ENCODE measurements at regions of chr3 and their contacts with region 1.

Region 1: GRCh38 chr3:69558912-69559311 is 173.0 kb upstream of the FRMD4B start:
- DNase-seq: peak in 1 of 3 donors; percentile 45
- ATAC-seq: peak; percentile 89 to 93
- H3K4me3 ChIP-seq: no peak overlapping the region
- H3K27ac ChIP-seq: no peak overlapping the region
- H3K4me1 ChIP-seq: no peaks in the 10 kb centered on the region
- H3K27me3 ChIP-seq: no peaks in the 10 kb centered on the region

Region 2: DNA sequence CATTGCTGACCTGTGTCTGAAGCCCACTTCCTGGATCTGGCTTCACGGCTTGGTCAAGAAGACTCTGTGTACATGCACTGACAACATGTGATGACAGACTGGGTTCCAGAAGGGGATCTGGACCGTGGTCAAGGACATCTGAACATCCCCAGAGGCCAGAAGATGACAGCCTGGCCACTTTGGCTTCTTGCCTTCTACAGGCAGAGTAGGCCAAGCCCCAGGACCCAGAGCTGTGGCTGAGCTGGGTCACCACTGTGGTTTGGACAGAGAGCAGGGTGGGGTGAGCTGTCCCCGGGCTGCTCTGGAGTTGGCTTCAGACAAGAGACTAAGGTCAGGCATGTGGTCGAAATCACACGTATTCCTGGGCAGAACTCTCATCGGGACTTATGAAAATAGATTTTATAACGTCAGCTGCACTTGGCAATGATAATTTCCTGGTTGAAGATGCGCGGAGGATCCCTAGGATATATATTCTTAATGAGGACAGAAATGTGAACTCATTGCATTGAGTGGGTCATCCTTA is 59.0 kb before region 1 on chr3:
- intact Hi-C with region 1: no loop called
- DNase-seq: peak; percentile 74 to 83 (median 83)
- ATAC-seq: peak; percentile 96 to 97
- H3K4me3 ChIP-seq: no peak overlapping the region
- H3K27ac ChIP-seq: peak overlapping the region; percentile 40
- H3K4me1 ChIP-seq: peaks cover 10% of the 10 kb centered on the region
- H3K27me3 ChIP-seq: no peaks in the 10 kb centered on the region

Region 3: DNA sequence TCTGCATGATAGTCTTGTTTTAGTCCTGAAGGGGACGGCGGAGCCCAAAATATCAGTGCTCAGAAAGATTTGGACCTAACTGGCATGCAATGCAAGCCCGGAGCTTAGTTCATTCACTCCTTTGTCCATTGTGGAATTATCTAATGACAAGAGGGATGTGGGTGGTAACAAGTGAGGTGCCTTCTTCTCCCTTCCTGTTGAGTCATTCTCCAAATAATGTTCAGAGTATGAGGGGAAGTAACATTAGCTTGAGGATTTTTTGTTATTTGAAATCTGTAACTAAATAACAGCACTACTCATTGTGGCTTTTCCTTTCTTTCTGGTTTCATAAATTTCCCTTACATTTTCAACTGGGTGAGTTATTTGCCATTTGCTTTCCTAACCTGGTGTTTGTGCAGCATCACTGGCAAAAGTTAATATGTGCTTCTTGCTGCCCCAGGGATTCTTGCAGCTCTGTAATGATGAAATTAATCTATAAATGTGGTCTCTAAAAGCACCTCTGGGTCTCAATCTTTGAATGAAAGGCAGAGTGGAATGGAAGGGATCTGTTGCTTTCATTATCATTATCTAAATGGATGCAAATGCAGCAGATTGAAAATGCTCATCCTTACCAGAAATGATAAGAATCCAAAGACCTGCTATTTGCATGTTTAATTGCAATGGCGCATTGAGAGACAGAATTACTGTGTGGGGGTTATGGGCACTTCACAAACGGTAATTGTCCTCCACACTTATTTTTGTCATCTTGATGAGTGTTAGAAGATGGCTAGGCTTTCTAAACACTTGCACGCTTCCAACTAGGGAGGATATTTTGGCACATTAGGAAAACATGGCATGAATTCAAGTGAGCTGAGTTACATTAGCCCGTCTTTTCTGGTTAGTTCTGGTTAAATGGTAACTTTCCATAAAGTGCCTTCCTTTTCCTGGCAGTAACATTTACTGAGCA is 90.5 kb after region 1 on chr3:
- intact Hi-C with region 1: loop called in 1 of 4 experiments (anchors 10 kb)
- DNase-seq: no peak
- ATAC-seq: peak; percentile 84 to 86
- H3K4me3 ChIP-seq: no peak overlapping the region
- H3K27ac ChIP-seq: no peak overlapping the region
- H3K4me1 ChIP-seq: no peaks in the 10 kb centered on the region
- H3K27me3 ChIP-seq: no peaks in the 10 kb centered on the region

Measured in right cardiac atrium (tissue), 5 donors.